ENCODE measurements at regions of chr9 and their contacts with region 1.

Region 1: DNA sequence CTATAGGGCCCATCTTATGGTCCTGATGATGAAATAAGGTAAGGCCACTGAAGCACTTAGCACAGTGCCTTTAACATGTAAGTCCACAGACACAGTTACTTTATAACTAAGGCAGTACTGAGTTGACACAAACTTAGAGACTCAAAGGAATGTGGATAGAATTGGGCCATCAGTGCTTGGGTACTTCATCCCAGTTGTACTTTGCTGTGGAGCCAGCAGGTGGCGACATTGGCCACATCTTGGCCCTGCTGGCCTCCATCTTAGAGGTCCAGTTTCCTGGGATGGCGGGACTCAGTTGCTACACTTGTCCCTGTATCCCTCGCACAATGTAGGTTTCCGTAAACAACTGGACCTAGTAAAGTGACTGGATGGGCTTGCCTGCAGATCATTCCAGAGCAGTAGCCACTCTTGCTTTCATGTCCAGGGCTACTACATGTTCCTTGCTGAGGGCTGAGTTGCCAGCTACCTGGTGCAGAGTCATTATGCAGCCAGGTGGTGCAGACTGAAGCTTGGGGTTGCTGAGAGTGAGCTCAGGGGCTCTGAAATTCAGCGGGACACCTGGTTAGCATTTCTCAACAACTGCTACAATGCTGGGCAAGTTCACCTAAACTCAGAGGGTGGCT is 10.6 kb downstream of the MTAP start:
- DNase-seq: peak; percentile 47 to 54
- H3K4me3 ChIP-seq: no peak overlapping the region
- H3K27ac ChIP-seq: peak overlapping the region; percentile 53
- H3K4me1 ChIP-seq: 0 out of 2 replicates have a peak, but pooled peaks cover 7% of the 10 kb centered on the region
- H3K27me3 ChIP-seq: no peaks in the 10 kb centered on the region
- CTCF ChIP-seq: peak; percentile 81

Region 2: GRCh38 chr9:21239911-21240310 is 573.1 kb before region 1 on chr9 and contains the start of gene IFNA14:
- CTCF ChIA-PET with region 1: interaction called, 15 read pairs
- POLR2A ChIA-PET with region 1: no interaction called
- intact Hi-C with region 1: no loop called
- DNase-seq: no peak
- H3K4me3 ChIP-seq: no peak within 1 kb of the TSS
- H3K27ac ChIP-seq: no peak within 1 kb of the TSS
- H3K4me1 ChIP-seq: no peaks in the 10 kb centered on the region
- H3K27me3 ChIP-seq: no peaks in the 10 kb centered on the region
- CTCF ChIP-seq: no peak
- total RNA-seq, gene IFNA14: not detected in 2 replicates

Region 3: DNA sequence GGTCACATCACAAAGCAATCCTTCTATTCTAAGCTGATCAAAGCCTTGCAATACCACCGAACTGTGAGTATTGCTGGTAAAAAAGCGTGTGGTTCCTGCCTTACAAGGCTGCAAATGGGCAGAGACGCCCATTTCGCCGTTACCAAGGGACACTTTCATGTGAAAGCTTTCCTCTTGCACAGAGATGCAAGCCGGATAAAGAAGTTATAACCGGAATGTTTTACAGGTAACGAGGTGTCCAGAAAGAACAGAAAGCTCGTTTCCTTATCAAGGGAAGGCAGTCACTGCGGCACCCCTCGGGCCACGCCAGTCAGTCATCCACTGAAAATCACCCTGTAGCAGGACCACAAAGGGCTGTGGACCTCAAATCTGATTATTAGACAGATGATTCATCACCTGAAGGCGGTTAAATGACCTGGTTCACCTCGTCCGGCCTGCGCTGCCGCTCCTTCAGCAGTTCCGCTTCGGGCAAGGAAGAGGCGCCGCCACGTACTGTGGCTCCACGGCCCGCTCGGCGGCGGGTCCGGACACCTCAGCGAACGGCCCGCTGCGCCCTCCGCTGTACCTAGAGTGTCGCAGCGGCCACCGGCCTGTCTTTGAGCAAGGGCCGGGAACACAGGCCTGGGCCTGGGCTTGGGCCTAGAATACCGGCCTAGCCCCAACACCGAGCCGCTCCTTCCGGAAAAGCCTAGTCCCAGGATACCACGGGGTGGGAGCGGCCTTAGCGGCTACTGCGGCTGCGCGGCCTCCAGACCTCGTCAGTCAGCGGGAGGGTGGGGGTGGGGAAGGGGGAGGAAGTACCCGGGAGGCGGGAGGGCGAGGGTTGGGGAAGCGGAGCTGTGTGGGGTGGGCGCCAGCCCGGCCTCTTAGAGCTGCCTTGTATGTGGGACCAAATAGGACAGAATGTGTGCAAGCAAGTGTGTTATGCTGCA is 478.1 kb before region 1 on chr9 and contains the start of gene KLHL9:
- CTCF ChIA-PET with region 1: no interaction called
- POLR2A ChIA-PET with region 1: interaction called, 12 read pairs
- intact Hi-C with region 1: no loop called
- DNase-seq: peak; percentile 65 to 81
- H3K4me3 ChIP-seq: peak within 1 kb of the TSS; percentile 92
- H3K27ac ChIP-seq: peak within 1 kb of the TSS; percentile 94
- H3K4me1 ChIP-seq: peaks cover 20% of the 10 kb centered on the region; the same call in 1 of the 2 replicates
- H3K27me3 ChIP-seq: no peaks in the 10 kb centered on the region
- CTCF ChIP-seq: no peak
- total RNA-seq, gene KLHL9: 9.1 and 10.5 TPM in 2 replicates

Region 4: DNA sequence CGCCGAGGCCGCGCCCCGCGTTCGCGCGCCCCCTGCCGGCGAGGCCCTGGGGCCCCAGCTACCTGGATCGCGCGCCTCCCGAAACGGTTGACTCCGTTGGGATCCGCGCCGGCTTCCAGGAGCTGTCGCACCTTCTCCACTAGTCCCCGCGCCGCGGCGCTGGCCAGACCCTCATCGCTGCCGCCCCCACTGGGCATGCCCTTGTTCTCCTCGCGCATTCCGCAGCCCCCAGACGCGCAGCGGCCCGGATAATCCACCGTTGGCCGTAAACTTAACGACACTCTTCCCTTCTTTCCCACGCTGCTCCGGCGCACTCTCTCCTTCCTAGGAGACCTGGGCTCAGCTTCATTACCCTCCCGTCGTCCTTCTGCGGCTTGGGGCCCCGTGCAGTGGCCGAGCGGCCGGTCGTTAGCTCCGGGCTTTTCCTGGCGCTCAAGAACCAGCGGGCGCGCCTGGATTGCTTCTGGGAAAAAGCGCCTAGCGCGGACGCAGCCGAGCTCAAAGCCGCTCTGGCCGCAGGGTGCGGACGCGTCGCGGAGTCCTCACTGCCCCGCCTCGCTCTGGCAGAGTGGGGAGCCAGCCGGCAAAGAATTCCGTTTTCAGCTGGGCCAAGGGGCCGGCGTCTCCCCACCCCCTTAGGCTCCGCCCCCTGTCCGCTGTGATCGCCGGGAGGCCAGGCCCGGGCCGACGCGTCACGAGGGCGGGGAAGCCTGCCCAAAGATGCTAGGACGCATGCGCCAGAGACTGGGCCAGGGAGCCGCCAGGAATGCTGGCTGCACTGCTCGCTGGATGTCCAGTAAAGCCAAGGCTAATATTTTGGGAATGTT is 195.9 kb after region 1 on chr9 and contains the start of gene CDKN2B:
- CTCF ChIA-PET with region 1: interaction called, 3 read pairs
- POLR2A ChIA-PET with region 1: no interaction called
- intact Hi-C with region 1: loop called (anchors 1 kb)
- DNase-seq: peak; percentile 86 to 94
- H3K4me3 ChIP-seq: peak within 1 kb of the TSS; percentile 100
- H3K27ac ChIP-seq: peak within 1 kb of the TSS; percentile 92
- H3K4me1 ChIP-seq: peaks cover 29% of the 10 kb centered on the region
- H3K27me3 ChIP-seq: no peaks in the 10 kb centered on the region
- CTCF ChIP-seq: peak; percentile 82
- total RNA-seq, gene CDKN2B: 33.8 and 40.2 TPM in 2 replicates

Region 5: DNA sequence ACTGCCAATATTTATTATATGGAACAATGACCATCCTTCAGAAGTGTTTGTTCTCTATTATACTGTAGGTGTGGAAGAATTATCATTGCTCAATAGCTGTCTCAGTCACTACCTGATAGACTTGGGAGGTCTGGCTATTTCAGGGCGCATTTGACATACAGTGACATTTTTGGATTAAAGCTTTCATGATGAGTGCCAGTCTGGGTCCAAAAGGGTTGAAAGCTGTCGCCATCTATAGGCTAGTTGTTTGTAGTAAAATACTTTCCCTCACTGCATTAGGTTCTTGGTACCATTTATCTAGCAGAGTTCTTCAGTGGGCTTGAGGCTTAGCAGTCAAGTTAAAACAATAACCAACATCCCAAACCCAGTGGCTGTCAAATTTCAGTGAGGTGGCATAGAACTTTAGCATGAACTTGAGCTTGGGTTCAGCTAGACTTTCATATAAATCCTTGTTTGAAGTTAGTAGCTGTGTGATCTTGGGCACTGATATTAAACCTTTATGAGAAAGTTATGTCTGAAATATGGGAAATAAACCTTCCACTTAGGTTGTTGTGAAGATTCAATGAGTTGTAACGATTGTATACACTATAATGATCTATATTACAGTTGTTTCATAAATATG is 306.6 kb after region 1 on chr9:
- CTCF ChIA-PET with region 1: interaction called, 4 read pairs
- POLR2A ChIA-PET with region 1: no interaction called
- intact Hi-C with region 1: loop called (anchors 5 kb)
- DNase-seq: no peak
- H3K4me3 ChIP-seq: no peak overlapping the region
- H3K27ac ChIP-seq: no peak overlapping the region
- H3K4me1 ChIP-seq: peaks cover 15% of the 10 kb centered on the region; the same call in 1 of the 2 replicates
- H3K27me3 ChIP-seq: no peaks in the 10 kb centered on the region
- CTCF ChIP-seq: peak; percentile 25; the same call in 1 of the 2 replicates

Region 6: GRCh38 chr9:22446950-22447617 is 634.0 kb after region 1 on chr9:
- CTCF ChIA-PET with region 1: no interaction called
- POLR2A ChIA-PET with region 1: no interaction called
- intact Hi-C with region 1: loop called (anchors 2 kb)
- DNase-seq: peak; percentile 56 to 60
- H3K4me3 ChIP-seq: peak overlapping the region; percentile 68
- H3K27ac ChIP-seq: no peak overlapping the region
- H3K4me1 ChIP-seq: peaks cover 17% of the 10 kb centered on the region; the same call in 1 of the 2 replicates
- H3K27me3 ChIP-seq: no peaks in the 10 kb centered on the region
- CTCF ChIP-seq: no peak; the same call in 1 of the 2 replicates